ENCODE measurements at regions of chrX and their contacts with region 1.

Region 1: DNA sequence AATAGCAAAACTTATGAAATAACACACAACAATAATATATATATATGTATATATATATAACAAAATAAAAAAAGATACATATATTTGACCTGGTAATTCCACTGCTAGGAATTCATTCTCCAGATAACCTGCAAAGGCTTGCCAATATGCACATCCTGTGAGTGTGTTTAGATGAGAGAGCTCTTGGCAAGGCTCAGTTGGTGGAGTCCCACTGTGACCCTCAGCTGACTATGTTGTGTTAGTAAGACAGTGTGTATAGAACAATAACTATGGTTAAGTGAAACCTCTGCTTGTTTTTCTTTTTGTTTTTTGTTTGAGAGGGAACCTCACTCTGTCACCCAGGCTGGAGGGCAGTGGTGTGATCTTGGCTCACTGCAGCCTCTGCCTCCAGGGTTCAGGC is 39.5 kb upstream of the RBMX start:
- DNase-seq: no peak
- H3K4me3 ChIP-seq: no peak overlapping the region
- CTCF ChIP-seq: no peak

Region 2: DNA sequence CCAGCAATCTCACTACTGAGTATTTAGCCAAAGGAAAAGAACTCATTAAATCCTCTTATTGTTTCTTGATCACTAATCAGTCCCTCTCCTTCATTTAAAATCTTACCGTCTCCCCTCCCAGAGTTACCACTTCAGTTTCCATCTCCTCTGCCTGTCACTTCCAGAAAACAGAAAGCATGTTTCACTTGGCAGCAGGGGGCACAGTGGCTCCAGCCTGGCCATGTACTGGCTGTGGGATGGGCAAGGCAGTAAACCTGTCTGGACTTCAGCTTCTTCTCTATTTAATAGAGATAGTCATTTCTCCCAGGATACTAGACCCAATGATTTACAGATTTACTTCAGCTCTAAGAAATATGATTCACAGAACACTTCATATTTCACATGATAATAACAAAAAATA is 208.9 kb before region 1 on chrX:
- CTCF ChIA-PET with region 1: interaction called, 104 read pairs
- POLR2A ChIA-PET with region 1: no interaction called
- DNase-seq: no peak
- H3K4me3 ChIP-seq: no peak overlapping the region
- CTCF ChIP-seq: peak; percentile 50